Heart right ventricle (tissue), 16 donors: ENCODE measurements at regions of chrX and their contacts with region 1.

Region 1: GRCh38 chrX:69222103-69223090 is 57.1 kb upstream of the PJA1 start:
- DNase-seq: peak; percentile 49 to 73
- ATAC-seq: peak; percentile 75 to 90 (median 80)
- H3K4me3 ChIP-seq: no peak overlapping the region
- H3K27ac ChIP-seq: no peak overlapping the region
- H3K4me1 ChIP-seq: peaks cover 0 to 7% (median 0%) of the 10 kb centered on the region in 9 donors
- H3K27me3 ChIP-seq: peaks cover 0 to 30% (median 0%) of the 10 kb centered on the region in 7 donors
- CTCF ChIP-seq: peak; percentile 49 to 80 (median 76)

Region 2: DNA sequence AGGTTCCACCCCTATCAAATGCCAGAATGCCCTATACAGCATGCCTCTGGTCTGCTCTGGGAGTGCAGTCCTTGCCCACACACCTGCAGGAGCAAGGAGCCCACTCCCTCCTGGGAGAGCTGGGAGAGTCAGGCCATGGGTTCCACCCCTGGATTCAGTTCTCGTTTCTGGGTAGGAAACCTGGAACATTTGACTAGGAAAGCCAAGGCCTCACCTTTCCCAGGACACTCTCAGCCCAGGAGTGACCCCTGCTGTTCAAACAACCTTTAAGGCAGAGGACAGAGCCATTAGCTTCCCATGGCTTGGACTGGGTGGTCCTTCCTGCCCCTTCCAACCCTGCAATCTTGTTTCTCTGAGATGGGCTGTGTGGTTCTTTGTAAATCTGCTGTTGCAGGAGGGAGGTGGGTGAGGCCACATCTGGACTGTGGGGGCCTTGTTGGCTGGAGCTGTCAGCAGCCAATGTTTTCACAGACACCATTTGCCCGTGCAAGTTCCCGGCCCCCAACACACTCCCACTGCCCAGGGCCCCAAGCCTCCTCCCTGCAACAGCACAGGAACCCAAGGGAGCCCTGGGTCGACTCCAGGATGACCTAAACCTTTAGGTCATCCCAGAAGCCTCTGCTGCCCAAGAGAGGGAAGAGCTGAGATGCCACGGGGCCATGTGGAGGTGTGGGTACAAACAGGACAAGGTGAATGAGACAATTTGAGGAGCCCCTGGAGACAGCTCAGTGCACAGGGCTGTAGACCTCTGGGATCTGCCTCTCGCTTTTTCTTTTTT is 161.6 kb before region 1 on chrX:
- intact Hi-C with region 1: loop called in 1 of 10 experiments (anchors 10 kb)
- DNase-seq: peak; percentile 22 to 60
- ATAC-seq: peak; percentile 79 to 89 (median 82)
- H3K4me3 ChIP-seq: no peak overlapping the region
- H3K27ac ChIP-seq: no peak overlapping the region
- H3K4me1 ChIP-seq: peaks cover 0 to 6% (median 0%) of the 10 kb centered on the region in 9 donors
- H3K27me3 ChIP-seq: peaks cover 0 to 8% (median 0%) of the 10 kb centered on the region in 7 donors
- CTCF ChIP-seq: peak in 8 of 9 donors; percentile 18 to 67 (median 56)

Region 3: GRCh38 chrX:69093960-69094871 is 128.2 kb before region 1 on chrX:
- intact Hi-C with region 1: loop called in 7 of 10 experiments (anchors 2 to 10 kb)
- DNase-seq: peak in 1 of 2 donors; percentile 45
- ATAC-seq: peak; percentile 32 to 72 (median 56)
- H3K4me3 ChIP-seq: no peak overlapping the region
- H3K27ac ChIP-seq: no peak overlapping the region
- H3K4me1 ChIP-seq: peaks cover 0 to 4% (median 0%) of the 10 kb centered on the region in 9 donors
- H3K27me3 ChIP-seq: peaks cover 0 to 21% (median 0%) of the 10 kb centered on the region in 7 donors
- CTCF ChIP-seq: peak; percentile 31 to 66 (median 55)

Region 4: DNA sequence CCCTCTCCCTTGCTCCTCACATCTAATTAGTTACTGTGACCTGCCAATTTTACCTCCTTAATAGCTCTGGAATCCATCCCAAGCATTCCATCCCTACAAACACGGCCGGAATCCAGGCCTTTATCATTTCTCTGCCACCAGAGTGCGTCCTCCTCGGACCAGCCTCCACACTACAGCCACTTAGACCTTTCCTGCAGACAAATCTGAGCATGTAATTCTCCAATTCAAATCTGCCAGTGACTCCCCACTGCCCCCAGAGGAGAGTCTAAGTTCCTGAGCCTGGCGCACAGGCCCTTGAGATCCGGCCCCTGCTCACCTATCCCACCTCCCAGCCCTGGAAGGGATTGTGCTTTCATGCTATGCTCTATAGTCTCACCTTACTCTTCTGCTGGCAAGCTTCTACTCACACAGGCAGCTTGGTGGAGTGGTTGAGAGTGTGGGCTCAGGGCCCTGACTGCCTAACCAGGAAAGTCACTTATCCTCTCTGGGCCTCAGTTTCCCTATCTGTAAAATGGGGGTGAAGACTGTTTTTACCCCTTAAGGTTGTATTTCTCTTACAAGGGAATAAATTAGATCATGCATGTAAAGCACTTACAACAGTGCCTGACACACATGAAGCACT is 88.4 kb before region 1 on chrX:
- intact Hi-C with region 1: loop called in 1 of 10 experiments (anchors 10 kb)
- DNase-seq: peak in 1 of 2 donors; percentile 8
- ATAC-seq: peak in 6 of 8 donors; percentile 29 to 55 (median 46)
- H3K4me3 ChIP-seq: no peak overlapping the region
- H3K27ac ChIP-seq: no peak overlapping the region
- H3K4me1 ChIP-seq: peaks cover 0 to 17% (median 0%) of the 10 kb centered on the region in 9 donors
- H3K27me3 ChIP-seq: peaks cover 0 to 85% (median 0%) of the 10 kb centered on the region in 7 donors
- CTCF ChIP-seq: peak in 7 of 9 donors; percentile 33 to 51 (median 44)

Region 5: DNA sequence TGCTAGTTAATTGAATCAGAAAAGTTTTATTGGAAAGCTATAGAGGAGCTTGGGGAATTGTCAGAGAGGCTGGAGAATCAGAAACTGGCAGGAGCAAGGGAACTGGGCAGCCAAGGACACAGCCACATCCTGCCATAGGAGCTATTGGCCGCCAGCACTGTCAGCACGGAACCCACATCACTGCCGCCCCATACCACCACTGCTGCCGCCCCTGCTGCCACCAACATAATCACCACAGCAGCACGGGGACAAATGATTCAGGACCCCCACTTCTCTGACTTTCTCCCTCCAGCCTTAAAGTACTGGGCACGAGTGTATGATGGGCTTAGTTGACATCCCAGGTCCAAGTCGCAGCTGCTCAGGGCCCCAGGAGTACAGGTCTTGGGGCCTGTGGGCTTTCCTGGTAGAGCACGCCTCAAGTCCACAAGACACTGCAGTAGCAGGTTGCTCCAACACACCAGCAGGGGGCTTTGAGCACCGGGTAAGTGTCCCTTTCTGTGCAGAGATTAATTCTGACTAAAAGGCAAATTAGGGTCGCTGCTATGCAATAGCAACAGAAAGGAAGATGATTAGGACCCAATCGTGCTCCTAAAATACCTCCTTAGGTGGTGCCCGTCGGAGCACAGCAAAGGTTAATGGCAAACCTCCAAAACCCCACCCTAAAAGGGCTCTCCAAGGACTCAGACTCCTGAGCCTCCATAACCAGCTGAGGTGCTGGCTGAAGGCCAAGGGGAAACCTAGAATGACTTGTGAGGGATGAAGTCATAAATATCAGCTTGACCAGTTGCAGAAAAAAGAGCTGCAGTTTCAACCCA is 64.0 kb before region 1 on chrX:
- intact Hi-C with region 1: loop called in 2 of 10 experiments (anchors 5 to 10 kb)
- DNase-seq: peak; percentile 41 to 73
- ATAC-seq: peak; percentile 68 to 89 (median 82)
- H3K4me3 ChIP-seq: no peak overlapping the region
- H3K27ac ChIP-seq: no peak overlapping the region
- H3K4me1 ChIP-seq: peaks cover 0 to 16% (median 5%) of the 10 kb centered on the region in 9 donors
- H3K27me3 ChIP-seq: peaks cover 0 to 33% (median 0%) of the 10 kb centered on the region in 7 donors
- CTCF ChIP-seq: peak; percentile 18 to 66 (median 53)

Region 6: DNA sequence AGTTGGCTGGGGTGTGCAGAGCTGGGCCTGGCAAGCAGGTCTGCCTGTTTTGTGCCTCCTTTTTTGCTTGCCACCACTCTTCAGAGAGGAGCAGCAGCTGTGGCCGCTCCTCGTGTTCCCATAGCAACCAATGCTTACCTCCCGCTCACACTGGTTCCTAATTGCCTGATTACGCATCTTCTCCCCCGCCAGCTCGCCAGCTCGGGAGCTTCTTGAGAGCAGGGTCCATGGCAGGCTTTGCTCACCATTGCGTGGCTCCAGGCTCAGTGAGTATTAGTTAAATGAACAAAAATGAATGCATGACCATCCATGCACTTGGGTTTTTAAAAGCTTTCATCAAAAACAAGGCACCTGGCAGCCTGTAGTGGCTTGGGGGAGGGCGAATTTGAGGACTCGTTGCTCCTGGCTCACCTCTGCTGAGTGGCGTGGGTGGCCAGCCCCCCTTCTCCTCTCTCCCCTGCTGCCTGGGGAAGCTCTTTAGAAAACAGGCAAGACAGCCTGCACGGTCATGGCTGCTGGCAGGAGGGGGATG is 43.0 kb before region 1 on chrX:
- intact Hi-C with region 1: no loop called
- DNase-seq: no peak
- ATAC-seq: no peak
- H3K4me3 ChIP-seq: no peak overlapping the region
- H3K27ac ChIP-seq: no peak overlapping the region
- H3K4me1 ChIP-seq: no peaks in the 10 kb centered on the region
- H3K27me3 ChIP-seq: peaks cover 0 to 53% (median 0%) of the 10 kb centered on the region in 7 donors
- CTCF ChIP-seq: no peak

Region 7: GRCh38 chrX:69238114-69238886 is 15.9 kb after region 1 on chrX:
- intact Hi-C with region 1: no loop called
- DNase-seq: peak; percentile 16 to 40
- ATAC-seq: peak; percentile 29 to 88 (median 78)
- H3K4me3 ChIP-seq: no peak overlapping the region
- H3K27ac ChIP-seq: peak overlapping the region in 5 of 10 donors; percentile 15 to 54 (median 30)
- H3K4me1 ChIP-seq: peaks cover 0 to 6% (median 0%) of the 10 kb centered on the region in 9 donors
- H3K27me3 ChIP-seq: peaks cover 0 to 42% (median 0%) of the 10 kb centered on the region in 7 donors
- CTCF ChIP-seq: no peak